IMR-90 (cell line): ENCODE measurements at regions of chr1 and their contacts with region 1.

Region 1: DNA sequence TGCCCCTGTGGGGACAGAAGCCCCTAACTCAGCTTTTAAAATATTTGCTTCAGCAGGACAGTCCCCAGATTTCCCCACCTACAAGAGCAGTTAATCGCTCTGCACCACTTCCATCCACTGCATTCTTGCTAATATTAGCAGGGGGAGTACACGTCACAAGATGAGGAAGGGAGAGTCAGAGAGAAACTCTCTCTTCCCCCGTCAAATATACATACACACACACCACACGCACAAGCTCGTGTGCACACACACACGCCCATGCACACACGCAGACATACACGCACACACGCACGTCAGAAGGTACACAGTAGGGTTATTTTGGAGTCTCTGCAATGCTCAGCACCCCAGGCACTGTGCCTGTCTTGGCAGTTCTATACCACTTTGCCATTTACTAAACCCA is 2.1 kb downstream of the CLCA1 start:
- DNase-seq: no peak
- ATAC-seq: no peak
- H3K4me3 ChIP-seq: no peak overlapping the region
- H3K27ac ChIP-seq: no peak overlapping the region
- H3K4me1 ChIP-seq: 0 out of 2 replicates have a peak, but pooled peaks cover 3% of the 10 kb centered on the region
- H3K27me3 ChIP-seq: peaks cover 16% of the 10 kb centered on the region
- CTCF ChIP-seq: no peak
- POLR2A ChIP-seq: no peak
- RAD21 ChIP-seq: no peak

Region 2: DNA sequence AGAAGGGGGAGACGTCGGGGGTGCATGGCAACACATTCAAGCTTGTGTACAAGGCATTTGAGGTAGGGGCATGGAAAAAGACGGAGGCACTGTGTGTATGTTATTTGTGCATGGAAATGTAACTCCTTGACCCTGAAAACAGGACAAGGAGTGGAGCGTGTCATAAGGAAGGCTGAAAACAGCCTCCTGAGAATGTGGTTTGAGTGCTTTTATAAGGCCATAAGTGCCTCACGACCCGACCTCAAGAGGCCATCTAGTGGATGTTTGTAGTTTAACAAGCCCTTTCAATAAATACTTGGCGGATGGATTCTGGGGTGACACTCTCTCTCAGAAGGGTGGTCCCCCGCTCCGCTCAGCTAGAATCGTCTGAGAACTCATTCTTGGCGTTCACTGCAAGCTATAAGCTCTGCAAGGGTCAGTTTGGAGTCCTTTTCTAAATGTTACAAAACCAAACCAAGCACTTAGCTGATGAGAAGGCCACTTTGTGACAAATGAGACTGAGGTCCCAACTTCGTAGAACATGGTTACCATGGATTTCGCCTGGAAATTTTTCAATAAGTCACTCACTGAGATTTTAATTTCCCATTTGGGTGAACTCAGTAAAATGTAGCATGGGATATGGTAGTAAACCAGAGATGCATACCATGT is 37.2 kb after region 1 on chr1:
- CTCF ChIA-PET with region 1: interaction called, 3 read pairs
- POLR2A ChIA-PET with region 1: no interaction called
- dilution Hi-C with region 1: no loop called
- in situ Hi-C with region 1: no loop called
- intact Hi-C with region 1: loop called (anchors 1 kb)
- DNase-seq: peak; percentile 38
- ATAC-seq: peak; percentile 54; the same call in 1 of the 2 replicates
- H3K4me3 ChIP-seq: no peak overlapping the region
- H3K27ac ChIP-seq: no peak overlapping the region
- H3K4me1 ChIP-seq: peaks cover 2% of the 10 kb centered on the region
- H3K27me3 ChIP-seq: peaks cover 2% of the 10 kb centered on the region
- CTCF ChIP-seq: peak; percentile 41
- POLR2A ChIP-seq: no peak
- RAD21 ChIP-seq: no peak; the same call in 1 of the 2 replicates

Region 3: DNA sequence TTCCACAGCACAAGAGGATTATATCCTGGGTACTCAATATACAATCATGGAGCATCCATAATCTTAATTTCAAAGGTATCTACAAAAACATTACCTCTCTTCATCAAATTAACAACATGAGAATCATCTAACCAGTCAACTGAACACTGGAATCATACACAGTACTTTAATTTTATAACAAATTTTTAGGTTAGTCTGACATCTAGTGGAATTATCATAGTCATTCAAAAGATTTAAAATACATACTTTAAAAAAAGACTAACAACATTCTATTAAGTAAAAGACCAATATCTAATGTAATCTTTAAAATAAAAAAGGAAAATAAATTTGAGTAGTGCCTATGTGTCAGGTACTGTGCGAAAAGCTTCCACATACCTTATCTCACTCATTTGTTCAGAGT is 216.7 kb after region 1 on chr1:
- CTCF ChIA-PET with region 1: no interaction called
- POLR2A ChIA-PET with region 1: no interaction called
- dilution Hi-C with region 1: no loop called
- in situ Hi-C with region 1: no loop called
- intact Hi-C with region 1: loop called (anchors 5 kb)
- DNase-seq: no peak
- ATAC-seq: peak; percentile 35; the same call in 1 of the 2 replicates
- H3K4me3 ChIP-seq: no peak overlapping the region
- H3K27ac ChIP-seq: no peak overlapping the region
- H3K4me1 ChIP-seq: no peaks in the 10 kb centered on the region
- H3K27me3 ChIP-seq: peaks cover 1% of the 10 kb centered on the region; the same call in 1 of the 2 replicates
- CTCF ChIP-seq: 0 out of 2 replicates have a peak, but pooled peaks have one; percentile 13
- POLR2A ChIP-seq: no peak
- RAD21 ChIP-seq: no peak; the same call in 1 of the 2 replicates

Region 4: GRCh38 chr1:86741947-86742572 is 271.2 kb after region 1 on chr1:
- CTCF ChIA-PET with region 1: no interaction called
- POLR2A ChIA-PET with region 1: no interaction called
- dilution Hi-C with region 1: no loop called
- in situ Hi-C with region 1: no loop called
- intact Hi-C with region 1: loop called (anchors 5 kb)
- DNase-seq: peak; percentile 39
- ATAC-seq: no peak
- H3K4me3 ChIP-seq: no peak overlapping the region
- H3K27ac ChIP-seq: no peak overlapping the region
- H3K4me1 ChIP-seq: no peaks in the 10 kb centered on the region
- H3K27me3 ChIP-seq: no peaks in the 10 kb centered on the region
- CTCF ChIP-seq: peak; percentile 66
- POLR2A ChIP-seq: no peak
- RAD21 ChIP-seq: peak; percentile 49